IMR-90 (cell line): ENCODE measurements at regions of chr5 and their contacts with region 1.

Region 1: DNA sequence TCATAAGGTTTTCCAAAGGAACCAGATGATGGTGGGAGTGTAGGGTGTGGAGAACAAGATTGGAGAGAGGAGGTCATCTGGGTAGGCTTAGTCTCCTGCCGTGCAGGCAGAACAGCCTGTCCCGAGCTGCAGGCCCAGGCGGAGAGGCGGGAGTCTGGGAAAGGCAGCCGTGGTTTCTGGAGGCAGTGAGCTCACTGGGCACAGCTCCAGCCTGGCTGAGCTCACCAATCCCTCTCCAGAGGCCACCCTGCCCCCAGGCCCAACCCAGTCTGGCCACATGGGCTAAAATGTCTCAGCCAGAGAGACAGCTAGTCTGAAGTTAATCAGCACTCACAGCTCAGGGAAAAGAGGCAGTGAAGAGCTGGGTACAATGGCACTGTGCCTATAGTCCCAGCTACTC is 12.3 kb downstream of the P4HA2 start:
- DNase-seq: peak; percentile 98
- ATAC-seq: peak; percentile 99
- H3K4me3 ChIP-seq: no peak overlapping the region
- H3K27ac ChIP-seq: peak overlapping the region; percentile 42
- H3K4me1 ChIP-seq: peaks cover 12% of the 10 kb centered on the region
- H3K27me3 ChIP-seq: no peaks in the 10 kb centered on the region
- CTCF ChIP-seq: no peak
- POLR2A ChIP-seq: no peak; the same call in 1 of the 2 replicates
- RAD21 ChIP-seq: 0 out of 2 replicates have a peak, but pooled peaks have one; percentile 9

Region 2: DNA sequence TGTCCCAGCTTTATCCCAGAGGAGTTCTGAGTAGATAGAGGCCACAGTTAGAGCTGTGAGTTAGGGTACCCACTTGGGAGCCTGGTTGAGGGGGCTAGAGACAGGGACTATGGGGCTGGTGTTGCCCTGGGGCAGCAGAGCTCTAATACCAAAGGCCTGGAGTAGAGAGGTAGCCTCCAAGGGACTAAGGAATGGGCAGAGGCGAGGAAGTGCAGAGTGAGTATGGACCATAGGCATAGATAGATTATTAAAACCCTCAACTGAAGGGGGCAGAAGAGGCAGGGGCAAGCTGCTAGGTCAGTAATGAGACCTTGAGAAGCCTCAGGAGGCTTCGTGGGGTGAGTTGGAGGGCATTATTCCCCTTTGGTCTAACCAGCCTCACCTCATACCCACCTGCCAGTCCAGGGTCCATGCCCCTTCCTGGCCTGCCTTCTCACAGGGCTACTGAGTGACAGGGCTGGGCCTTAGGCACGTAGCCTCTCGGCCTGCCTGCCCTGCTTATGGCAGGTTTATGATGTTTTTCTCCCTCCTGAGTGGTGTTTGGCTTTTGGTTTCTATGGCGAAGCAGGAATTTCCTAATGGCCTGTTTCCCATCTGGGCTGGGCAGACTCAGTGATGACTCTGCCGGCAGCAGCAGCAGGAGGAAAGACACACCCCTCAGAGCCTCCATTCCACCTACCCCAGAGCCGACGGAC is 50.2 kb after region 1 on chr5:
- CTCF ChIA-PET with region 1: interaction called, 5 read pairs
- POLR2A ChIA-PET with region 1: interaction called, 10 read pairs
- dilution Hi-C with region 1: no loop called
- in situ Hi-C with region 1: no loop called
- intact Hi-C with region 1: no loop called
- DNase-seq: peak; percentile 96
- ATAC-seq: peak; percentile 77
- H3K4me3 ChIP-seq: no peak overlapping the region
- H3K27ac ChIP-seq: peak overlapping the region; percentile 42; the same call in 1 of the 2 replicates
- H3K4me1 ChIP-seq: peaks cover 69% of the 10 kb centered on the region
- H3K27me3 ChIP-seq: no peaks in the 10 kb centered on the region
- CTCF ChIP-seq: no peak; the same call in 1 of the 2 replicates
- POLR2A ChIP-seq: peak; percentile 76
- RAD21 ChIP-seq: no peak; the same call in 1 of the 2 replicates